Activated CD4-positive, alpha-beta T cell treated with anti-CD3 and anti-CD28 coated beads, Interleukin-2, amount 10 ng/mL, durations not matched to agents 7 days and 5 days (primary cell): ENCODE measurements at regions of chr15 and their contacts with region 1.

Region 1: GRCh38 chr15:73972984-73973682 is 19.0 kb downstream of the STOML1 start:
- DNase-seq: peak; percentile 87
- H3K4me3 Mint-ChIP-seq: no peak overlapping the region
- H3K27ac Mint-ChIP-seq: peak overlapping the region; percentile 5
- H3K4me1 Mint-ChIP-seq: peaks cover 49% of the 10 kb centered on the region
- H3K27me3 Mint-ChIP-seq: peaks cover 13% of the 10 kb centered on the region

Region 2: DNA sequence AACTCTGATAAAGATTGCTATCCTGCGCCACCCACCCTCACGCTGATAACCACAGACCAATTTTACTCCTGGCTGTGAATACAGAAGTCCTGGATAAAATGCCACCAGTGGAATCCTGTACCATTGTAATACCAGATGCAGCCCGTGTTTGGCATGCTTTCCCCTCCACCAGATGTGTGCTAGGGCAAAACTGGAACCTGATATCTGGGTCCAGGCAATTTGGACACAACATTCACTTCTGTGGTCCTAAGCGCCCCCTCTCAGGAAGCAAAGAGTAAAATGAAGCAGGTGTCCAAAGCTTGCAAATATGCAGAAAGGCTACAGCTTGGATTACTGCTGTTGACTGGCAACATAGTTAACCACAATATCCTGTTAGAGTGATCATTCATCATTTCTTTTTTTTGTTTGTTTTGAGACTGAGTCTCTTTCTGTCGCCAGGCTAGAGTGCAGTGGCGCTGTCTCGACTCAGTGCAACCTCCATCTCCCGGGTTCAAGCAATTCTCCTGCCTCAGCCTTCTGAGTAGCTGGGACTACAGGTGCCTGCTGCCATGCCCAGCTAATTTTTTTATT is 14.0 kb before region 1 on chr15:
- CTCF ChIA-PET with region 1: interaction called, 21 read pairs
- POLR2A ChIA-PET with region 1: no interaction called
- DNase-seq: peak; percentile 59
- H3K4me3 Mint-ChIP-seq: peak overlapping the region; percentile 4
- H3K27ac Mint-ChIP-seq: peak overlapping the region; percentile 85
- H3K4me1 Mint-ChIP-seq: peaks cover 40% of the 10 kb centered on the region
- H3K27me3 Mint-ChIP-seq: peaks cover 4% of the 10 kb centered on the region

Region 3: DNA sequence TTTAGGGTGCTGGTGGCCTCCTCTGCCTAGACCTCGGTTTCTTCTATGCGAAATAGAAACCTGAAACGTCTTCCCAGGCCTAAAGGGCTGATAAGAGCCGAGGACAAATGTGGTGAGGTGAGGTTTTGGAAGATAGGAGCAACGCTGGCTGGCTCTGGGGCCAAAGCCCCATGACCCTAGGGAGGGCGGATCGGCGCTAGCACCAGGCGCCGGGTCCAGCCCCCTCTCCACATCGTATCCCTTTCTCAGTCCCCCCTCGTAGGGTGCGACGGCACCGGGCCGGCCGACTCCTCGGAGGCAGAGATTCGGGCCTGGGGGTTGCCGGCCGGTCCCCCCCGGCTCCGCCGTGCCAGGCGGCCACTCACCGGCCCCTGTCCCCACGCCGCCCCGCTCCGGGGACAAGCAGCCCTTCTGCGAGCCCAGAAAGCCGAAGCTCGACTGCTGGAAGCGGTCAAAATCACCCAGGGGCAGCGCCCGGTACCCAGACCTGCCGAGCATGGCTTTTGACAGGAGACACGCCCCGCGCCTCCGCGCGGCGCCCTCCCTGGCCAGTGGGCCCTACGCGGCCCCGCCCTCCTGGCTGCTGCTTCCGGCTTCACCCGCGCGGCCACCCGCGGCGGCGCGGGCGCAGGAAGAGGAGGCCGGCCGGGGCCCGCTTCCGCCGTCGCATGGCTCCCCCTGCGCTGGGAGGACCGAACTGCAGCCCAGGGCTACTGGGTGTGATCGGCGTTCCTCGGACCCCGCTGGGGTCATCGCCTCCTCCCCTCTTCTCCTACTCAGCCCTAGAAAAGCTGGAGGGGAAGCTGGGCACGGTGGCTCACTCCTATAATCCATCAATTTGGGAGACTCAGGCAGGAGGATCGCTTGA is 18.8 kb after region 1 on chr15 and contains the start of gene STOML1:
- CTCF ChIA-PET with region 1: interaction called, 63 read pairs
- POLR2A ChIA-PET with region 1: interaction called, 4 read pairs
- DNase-seq: peak; percentile 92
- H3K4me3 Mint-ChIP-seq: peak within 1 kb of the TSS; percentile 78
- H3K27ac Mint-ChIP-seq: peak within 1 kb of the TSS; percentile 93
- H3K4me1 Mint-ChIP-seq: peaks cover 50% of the 10 kb centered on the region
- H3K27me3 Mint-ChIP-seq: no peaks in the 10 kb centered on the region
- total RNA-seq, gene STOML1: 12.0 to 12.8 TPM

Region 4: DNA sequence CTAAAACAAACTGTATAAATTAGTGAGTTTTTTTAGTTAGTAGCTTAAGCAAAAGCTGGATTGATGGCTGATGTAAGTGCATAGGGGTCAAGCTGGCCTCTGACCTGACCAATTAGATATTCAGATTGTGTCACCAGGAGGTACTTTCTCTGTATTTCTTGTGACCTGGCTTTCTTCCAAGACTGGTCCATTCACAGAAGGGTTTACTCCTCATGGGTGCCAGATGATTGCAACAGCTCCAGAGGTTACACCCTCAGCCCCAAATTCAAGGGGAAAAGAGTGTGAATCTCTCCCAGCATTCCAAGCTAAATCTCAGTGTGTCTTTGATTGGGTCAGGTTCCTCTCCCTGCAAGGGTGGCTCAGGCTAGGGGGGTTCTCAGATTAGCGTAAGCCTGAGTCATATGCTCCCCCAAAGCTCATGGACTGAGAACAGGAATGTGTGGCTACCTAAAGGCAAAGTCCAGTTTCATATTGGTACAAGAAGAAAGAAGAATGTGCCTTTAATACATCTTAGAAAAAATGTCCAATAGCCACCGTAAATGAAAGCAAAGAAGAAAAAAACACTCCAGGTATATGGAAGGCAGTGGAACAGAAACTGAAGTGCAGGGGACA is 37.9 kb after region 1 on chr15:
- CTCF ChIA-PET with region 1: interaction called, 12 read pairs
- POLR2A ChIA-PET with region 1: no interaction called
- DNase-seq: no peak
- H3K4me3 Mint-ChIP-seq: no peak overlapping the region
- H3K27ac Mint-ChIP-seq: peak overlapping the region; percentile 70
- H3K4me1 Mint-ChIP-seq: peaks cover 71% of the 10 kb centered on the region
- H3K27me3 Mint-ChIP-seq: no peaks in the 10 kb centered on the region